Lower leg skin (tissue), 4 donors: ENCODE measurements at regions of chr7 and their contacts with region 1.

Region 1: DNA sequence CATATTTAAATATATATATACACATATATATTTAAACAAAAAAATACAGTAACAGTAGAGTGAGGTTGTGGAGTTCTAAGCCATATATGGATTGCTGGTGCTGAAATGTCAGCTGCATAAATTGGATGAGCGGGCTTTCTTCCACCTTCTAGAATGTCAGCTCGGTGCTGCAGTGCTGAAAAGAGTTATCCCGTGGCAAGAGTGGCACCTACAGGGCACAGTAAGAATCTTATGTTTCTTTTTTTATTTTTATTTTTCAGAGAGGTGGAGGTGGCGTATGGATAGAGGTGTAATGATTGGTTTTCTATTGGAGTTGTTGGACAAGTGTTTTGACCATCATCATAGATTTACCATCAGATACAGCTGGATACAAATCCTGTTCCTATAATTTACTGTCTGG is 86.2 kb upstream of the DYNC1I1 start:
- DNase-seq: peak in 1 of 2 donors; percentile 56
- H3K4me3 ChIP-seq: no peak overlapping the region
- CTCF ChIP-seq: no peak
- POLR2A ChIP-seq: no peak

Region 2: DNA sequence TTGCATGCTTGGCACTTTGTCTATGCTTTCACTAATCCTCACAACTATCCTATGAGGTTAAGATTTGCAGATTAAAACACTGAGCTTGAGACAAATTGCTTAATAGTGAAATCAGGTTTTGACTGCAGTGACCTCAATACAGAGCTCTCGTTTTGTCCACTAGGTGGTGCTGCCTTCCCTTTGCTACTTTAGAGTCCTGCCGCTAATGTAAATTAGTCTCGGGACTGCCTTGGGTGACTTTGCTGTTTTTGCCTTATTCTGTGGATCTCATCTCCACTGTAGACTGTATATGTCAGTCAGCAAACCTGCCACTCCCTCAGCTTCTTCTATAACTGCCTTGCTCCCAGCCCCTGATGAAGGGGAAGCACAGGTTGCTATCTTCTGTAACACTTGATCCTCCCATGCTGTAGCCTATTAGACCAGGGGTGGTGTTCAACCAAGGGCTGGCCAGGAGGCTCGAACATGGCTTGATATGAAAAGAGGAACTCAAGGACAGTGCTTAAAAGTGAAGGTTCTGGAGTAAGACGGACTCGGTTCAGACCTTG is 174.3 kb before region 1 on chr7:
- intact Hi-C with region 1: loop called (anchors 5 kb)
- DNase-seq: peak; percentile 76 to 91
- H3K4me3 ChIP-seq: no peak overlapping the region
- CTCF ChIP-seq: peak in 1 of 3 donors; percentile 8
- POLR2A ChIP-seq: no peak

Region 3: DNA sequence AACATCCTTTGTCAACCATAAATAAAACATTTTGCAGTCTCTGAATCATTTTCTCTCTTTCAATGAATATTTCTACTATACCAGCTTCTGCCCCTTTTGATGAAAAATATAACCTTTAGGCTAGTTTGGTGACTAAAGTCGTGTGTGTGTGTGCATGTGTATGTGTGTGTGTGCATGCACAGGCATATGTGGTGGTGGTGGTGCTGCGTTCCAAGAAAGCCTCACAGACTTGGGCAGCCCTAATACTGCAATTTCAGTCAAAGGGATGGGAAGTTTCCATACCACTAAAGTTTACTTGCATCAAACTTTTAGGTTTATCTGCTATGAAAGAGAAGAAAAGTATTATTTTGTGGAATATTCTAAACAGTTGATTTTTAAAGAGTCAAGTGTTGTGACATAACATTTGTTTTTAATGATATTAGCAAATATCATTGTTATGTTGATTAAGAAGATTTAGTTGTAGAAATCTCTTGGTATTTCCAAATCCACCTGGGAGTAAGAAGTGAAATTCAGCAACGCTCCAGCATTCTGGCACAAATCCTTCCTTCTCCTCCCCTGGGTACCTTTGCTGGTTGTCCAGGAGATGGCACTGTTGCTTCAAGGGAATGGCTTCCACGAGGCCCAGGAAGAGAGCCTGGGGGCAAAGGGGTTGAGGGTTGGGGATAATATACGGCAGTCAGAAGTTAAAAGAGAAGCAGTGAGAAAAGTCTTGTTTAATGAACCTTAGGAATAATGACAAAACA is 158.9 kb before region 1 on chr7:
- intact Hi-C with region 1: loop called (anchors 5 kb)
- DNase-seq: peak; percentile 53 to 85
- H3K4me3 ChIP-seq: no peak overlapping the region
- CTCF ChIP-seq: peak in 1 of 3 donors; percentile 66
- POLR2A ChIP-seq: no peak

Region 4: GRCh38 chr7:95596198-95597063 is 89.7 kb before region 1 on chr7 and contains the start of gene PDK4:
- intact Hi-C with region 1: loop called (anchors 5 kb)
- DNase-seq: peak; percentile 97 to 99
- H3K4me3 ChIP-seq: peak within 1 kb of the TSS; percentile 83
- CTCF ChIP-seq: no peak
- POLR2A ChIP-seq: peak in 1 of 2 donors; percentile 88
- total RNA-seq, gene PDK4: 64.3 to 1,085 (median 625) TPM

Region 5: DNA sequence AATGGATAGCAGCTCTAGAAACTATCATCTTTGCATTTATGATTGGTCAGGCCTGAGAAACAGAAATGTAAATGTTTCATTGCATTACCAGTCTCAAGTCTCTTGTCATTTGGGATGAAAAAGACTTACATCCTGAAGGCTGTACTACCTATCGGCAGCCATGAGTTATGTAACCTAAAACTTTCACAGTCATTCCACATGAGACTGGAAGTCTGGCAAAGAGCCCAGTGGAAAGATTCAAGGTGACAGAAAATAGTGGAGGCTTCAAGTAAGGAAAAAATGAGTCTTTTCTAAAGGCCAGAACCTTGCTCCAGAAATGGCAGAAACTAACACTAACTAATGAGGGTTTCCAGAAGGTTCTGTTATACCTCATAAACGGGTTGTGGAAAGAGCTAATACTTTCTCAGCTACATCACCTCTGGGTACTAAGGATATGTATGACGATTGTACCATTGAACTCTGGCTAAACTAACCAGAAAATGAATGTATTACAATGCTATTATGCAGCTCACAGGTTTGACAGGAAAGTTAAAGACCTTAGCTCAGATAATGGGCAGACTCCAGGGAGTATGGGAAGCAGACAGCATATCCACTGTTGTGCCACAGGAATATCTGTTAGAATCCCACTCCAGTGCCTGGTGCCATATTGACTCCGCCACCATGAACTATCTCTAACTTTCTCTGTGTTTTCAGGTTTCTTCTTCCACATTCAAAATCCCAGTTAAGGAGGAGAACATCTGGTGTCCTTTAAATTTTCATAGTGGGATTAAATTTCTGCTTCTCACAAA is 44.6 kb after region 1 on chr7:
- intact Hi-C with region 1: no loop called
- DNase-seq: no peak
- H3K4me3 ChIP-seq: no peak overlapping the region
- CTCF ChIP-seq: no peak
- POLR2A ChIP-seq: no peak

Region 6: DNA sequence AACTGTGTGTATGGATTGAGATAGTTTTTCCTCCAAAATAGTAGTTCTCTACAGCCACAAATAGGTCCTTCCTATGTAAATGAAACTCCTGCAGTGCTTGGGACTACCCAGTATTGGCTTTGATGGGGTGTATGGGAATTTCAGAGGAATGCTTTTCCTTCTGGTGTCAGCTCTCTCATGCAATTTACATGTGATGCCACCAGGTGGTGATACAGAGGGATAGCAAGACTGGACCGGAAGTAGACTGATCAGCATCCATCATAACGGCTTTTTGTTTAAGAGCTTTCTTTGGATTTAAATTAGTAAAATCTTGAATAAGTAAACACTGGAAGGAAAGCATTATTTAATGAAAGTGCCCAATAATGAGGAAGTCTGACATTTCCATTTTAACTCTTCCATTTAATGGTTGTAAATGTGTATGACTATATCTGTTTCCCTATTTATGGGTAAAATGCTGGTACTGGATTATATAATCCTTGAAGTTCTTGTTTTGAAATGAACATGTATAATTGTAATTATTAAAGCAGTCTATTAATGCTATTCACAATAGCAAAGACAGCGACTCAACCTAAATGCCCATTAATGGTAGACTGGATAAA is 108.9 kb after region 1 on chr7:
- intact Hi-C with region 1: no loop called
- DNase-seq: no peak
- H3K4me3 ChIP-seq: no peak overlapping the region
- CTCF ChIP-seq: no peak
- POLR2A ChIP-seq: no peak

Region 7: GRCh38 chr7:96952974-96953391 is 1266.9 kb after region 1 on chr7:
- intact Hi-C with region 1: no loop called
- DNase-seq: no peak
- H3K4me3 ChIP-seq: no peak overlapping the region
- CTCF ChIP-seq: no peak
- POLR2A ChIP-seq: no peak